ENCODE measurements at regions of chr22 and their contacts with region 1.

Region 1: GRCh38 chr22:47213571-47214230 is 451.3 kb downstream of the TBC1D22A start:
- DNase-seq: peak; percentile 61
- ATAC-seq: peak; percentile 84
- H3K4me3 ChIP-seq: no peak overlapping the region
- H3K27ac ChIP-seq: no peak overlapping the region
- H3K4me1 ChIP-seq: no peaks in the 10 kb centered on the region
- H3K27me3 ChIP-seq: no peaks in the 10 kb centered on the region
- CTCF ChIP-seq: peak; percentile 83

Region 2: DNA sequence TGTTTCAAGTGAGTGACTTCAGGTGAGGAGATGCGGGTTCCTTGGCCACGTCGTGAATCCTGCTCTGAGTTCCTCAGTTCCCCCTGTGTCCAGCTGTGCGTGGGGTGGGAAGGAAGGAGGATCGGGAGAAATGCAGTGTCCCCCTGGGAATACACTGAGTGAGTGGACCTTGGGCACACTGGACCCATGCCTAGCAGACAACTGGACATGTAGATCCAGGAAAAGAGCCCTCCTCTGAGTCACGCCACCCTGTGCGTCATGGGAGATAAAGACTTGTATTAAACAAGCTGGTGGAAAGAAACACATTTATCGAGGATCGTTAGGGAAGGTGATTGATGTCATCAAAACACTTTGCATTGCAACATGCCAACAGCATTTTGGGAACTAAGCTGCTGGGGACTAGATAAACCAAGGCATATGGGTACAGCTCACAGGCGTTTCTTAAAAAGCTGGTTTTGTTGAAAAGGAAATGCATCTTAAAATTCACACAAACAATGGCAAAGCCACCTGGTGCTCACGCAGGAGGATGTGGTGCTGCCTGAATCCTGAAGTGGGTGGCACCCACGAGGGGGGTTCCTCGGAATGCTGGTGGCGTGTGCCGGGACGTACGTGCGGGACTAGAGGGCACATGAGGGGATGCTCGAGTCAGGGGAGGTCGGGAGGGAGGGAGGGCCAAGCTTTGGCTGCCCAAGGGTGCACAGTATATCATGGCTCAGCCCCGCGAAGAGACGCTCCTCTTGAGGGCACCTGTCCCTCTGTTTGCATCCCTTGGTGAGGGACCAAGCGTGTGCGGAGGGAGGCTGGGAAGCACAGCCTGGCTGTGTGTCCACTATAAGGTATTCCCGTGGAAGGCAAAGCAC is 147.7 kb before region 1 on chr22:
- CTCF ChIA-PET with region 1: no interaction called
- POLR2A ChIA-PET with region 1: no interaction called
- intact Hi-C with region 1: no loop called
- DNase-seq: no peak
- ATAC-seq: no peak
- H3K4me3 ChIP-seq: no peak overlapping the region
- H3K27ac ChIP-seq: no peak overlapping the region
- H3K4me1 ChIP-seq: no peaks in the 10 kb centered on the region
- H3K27me3 ChIP-seq: no peaks in the 10 kb centered on the region
- CTCF ChIP-seq: no peak

Region 3: DNA sequence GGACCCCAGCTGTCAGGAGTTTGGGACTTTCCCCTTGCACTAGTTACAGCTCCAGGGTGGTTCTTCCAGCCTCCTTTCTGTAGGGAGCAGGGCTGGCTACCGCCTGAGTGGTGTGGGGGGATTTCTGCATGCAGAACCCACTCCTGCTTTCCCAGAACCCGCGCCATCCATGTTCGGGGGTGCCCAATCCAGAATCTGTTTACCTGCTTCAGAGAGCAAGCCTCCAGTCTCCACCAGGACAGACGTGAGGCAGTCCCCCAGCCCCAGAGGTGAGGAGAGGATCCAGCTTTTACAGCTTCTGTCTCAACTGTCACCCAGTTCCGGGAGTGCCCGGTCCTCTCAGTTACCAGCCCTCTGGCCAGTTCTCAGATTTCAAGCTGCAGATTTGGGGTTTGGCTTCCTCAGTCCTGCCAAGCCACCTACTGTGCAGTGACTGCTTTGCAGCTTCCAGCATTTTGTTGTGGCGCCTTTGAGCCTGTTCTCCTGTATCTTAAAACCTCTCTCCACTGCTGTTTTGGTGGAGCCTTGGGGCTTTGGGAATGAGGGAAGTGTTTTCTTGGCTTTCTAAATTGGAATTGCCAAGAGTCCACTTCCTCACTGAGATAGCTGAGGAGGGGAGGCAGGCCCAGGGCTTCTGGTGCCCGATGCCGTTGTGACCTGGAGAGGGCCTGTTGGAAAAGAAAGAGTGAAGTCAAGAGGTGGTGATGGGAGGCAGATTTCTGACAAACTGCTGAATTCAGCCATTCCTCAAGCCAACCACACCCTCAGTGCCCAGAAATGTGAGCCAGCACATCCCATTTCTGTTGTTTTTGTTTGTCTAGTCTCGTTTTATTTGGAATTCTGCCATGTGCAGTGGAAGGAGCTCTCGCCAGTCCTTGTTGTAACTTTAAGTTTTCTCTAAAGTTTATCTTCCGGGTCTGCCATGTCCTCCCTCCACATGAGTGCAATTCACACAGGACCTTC is 62.1 kb after region 1 on chr22:
- CTCF ChIA-PET with region 1: no interaction called
- POLR2A ChIA-PET with region 1: no interaction called
- intact Hi-C with region 1: loop called (anchors 2 kb)
- DNase-seq: peak; percentile 78
- ATAC-seq: peak; percentile 94
- H3K4me3 ChIP-seq: 0 out of 2 replicates have a peak overlapping the region, but pooled peaks have one; percentile 18
- H3K27ac ChIP-seq: peak overlapping the region; percentile 49
- H3K4me1 ChIP-seq: peaks cover 21% of the 10 kb centered on the region
- H3K27me3 ChIP-seq: no peaks in the 10 kb centered on the region
- CTCF ChIP-seq: peak; percentile 51

Region 4: DNA sequence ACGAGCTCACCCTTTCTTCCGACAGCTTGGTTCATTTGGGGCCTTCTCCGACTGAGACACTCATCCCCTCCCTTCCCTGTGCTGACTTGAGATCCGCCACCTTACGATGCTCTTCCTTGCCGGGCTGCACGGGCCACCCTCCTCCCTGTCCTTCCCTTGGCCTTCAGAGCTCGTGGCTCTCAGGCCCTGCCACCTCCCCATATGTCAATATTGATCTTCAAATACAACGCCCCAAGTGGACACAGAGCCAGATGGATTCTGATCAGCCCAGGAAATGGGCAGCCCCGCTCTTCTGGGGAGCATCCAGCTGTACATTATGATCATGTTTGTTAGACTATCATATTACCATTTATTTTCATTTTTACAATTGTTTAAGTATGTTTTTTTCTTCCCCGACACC is 361.6 kb after region 1 on chr22:
- CTCF ChIA-PET with region 1: no interaction called
- POLR2A ChIA-PET with region 1: no interaction called
- intact Hi-C with region 1: loop called (anchors 2 kb)
- DNase-seq: no peak
- ATAC-seq: peak; percentile 37
- H3K4me3 ChIP-seq: no peak overlapping the region
- H3K27ac ChIP-seq: no peak overlapping the region
- H3K4me1 ChIP-seq: no peaks in the 10 kb centered on the region
- H3K27me3 ChIP-seq: peaks cover 26% of the 10 kb centered on the region
- CTCF ChIP-seq: no peak

Region 5: DNA sequence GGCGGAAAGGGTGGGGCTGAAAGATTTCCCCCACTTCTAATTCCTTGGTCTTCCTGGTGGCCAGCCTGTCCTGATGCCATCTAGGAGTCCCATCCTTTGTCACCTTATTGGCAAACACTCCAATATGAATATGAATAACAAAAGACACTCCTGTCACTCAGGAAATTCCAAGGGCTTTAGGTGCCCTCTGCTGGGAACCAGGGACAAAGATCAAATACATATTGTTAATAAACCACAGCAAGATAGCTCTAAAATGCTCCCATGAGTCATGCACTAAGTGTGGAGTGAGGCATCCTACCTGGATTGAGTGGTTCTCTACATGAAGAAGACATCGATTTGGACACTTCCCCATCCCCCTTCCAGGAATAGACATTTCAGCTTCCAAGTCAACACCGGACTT is 372.3 kb after region 1 on chr22:
- CTCF ChIA-PET with region 1: no interaction called
- POLR2A ChIA-PET with region 1: no interaction called
- intact Hi-C with region 1: loop called (anchors 1 kb)
- DNase-seq: peak; percentile 43
- ATAC-seq: peak; percentile 64
- H3K4me3 ChIP-seq: no peak overlapping the region
- H3K27ac ChIP-seq: no peak overlapping the region
- H3K4me1 ChIP-seq: no peaks in the 10 kb centered on the region
- H3K27me3 ChIP-seq: no peaks in the 10 kb centered on the region
- CTCF ChIP-seq: peak; percentile 39

Region 6: GRCh38 chr22:47631557-47632344 is 418.1 kb after region 1 on chr22:
- CTCF ChIA-PET with region 1: interaction called, 7 read pairs
- POLR2A ChIA-PET with region 1: interaction called, 25 read pairs
- intact Hi-C with region 1: no loop called
- DNase-seq: peak; percentile 91
- ATAC-seq: peak; percentile 75
- H3K4me3 ChIP-seq: peak overlapping the region; percentile 97
- H3K27ac ChIP-seq: peak overlapping the region; percentile 77
- H3K4me1 ChIP-seq: peaks cover 29% of the 10 kb centered on the region
- H3K27me3 ChIP-seq: no peaks in the 10 kb centered on the region
- CTCF ChIP-seq: no peak

Region 7: DNA sequence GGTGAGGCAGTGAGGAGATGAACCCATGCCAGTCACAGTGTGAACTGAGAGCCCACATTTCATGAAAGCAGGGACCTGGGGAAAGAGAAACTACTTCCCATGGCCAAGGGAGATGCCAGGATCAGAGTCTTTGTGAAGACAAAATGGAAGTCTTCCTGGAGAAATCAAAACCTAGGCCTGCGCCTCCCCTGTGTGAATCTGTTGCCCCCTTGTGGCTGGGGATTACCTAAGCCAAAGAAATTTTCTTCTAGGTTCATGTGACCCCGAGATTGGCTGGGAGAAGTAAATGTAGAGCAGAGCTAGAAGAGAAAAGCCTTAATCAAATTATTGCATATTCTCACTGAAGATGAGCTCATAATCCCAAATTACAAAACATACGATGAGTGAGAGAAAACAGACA is 624.0 kb after region 1 on chr22:
- CTCF ChIA-PET with region 1: no interaction called
- POLR2A ChIA-PET with region 1: no interaction called
- intact Hi-C with region 1: loop called (anchors 5 kb)
- DNase-seq: peak; percentile 54
- ATAC-seq: no peak
- H3K4me3 ChIP-seq: no peak overlapping the region
- H3K27ac ChIP-seq: 0 out of 2 replicates have a peak overlapping the region, but pooled peaks have one; percentile 26
- H3K4me1 ChIP-seq: peaks cover 25% of the 10 kb centered on the region
- H3K27me3 ChIP-seq: no peaks in the 10 kb centered on the region
- CTCF ChIP-seq: peak; percentile 67